Activated CD4-positive, alpha-beta T cell treated with anti-CD3 and anti-CD28 coated beads, Interleukin-2, amount 10 ng/mL, durations not matched to agents 24 days and 14 days (primary cell): ENCODE measurements at regions of chr1 and their contacts with region 1.

Region 1: DNA sequence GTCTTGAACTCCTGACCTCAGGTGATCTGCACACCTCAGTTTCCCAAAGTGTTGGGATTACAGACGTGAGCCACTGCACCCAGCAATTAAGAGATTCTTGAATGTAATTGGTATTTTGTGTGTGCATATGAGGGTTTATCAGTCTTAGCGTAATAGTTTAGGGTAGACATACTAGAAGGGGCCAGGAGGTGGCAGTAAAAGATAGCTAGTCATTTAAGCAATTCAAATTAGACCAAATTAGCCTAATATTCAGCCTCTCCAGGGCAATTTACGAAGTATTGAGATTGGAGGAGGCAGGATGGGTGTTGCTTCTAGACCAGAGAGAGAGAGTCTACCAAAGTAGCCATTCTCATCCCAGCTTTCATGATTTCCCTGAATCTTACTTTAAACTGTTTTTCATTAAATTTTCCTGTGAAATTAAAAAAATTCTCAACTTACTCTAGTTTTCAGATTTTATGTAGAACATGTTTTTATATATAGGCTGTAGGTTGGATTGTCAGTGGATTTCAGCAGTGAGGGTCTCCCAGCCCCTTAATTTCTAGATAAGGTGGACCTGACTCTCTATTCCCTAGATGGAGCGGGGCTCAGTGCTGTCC is 119.7 kb downstream of the HHAT start:
- DNase-seq: peak; percentile 72
- H3K4me3 Mint-ChIP-seq: no peak overlapping the region
- H3K27ac Mint-ChIP-seq: no peak overlapping the region
- H3K4me1 Mint-ChIP-seq: peaks cover 24% of the 10 kb centered on the region
- H3K27me3 Mint-ChIP-seq: peaks cover 14% of the 10 kb centered on the region

Region 2: GRCh38 chr1:210373885-210374599 is 74.4 kb before region 1 on chr1:
- intact Hi-C with region 1: loop called (anchors 1 kb)
- DNase-seq: peak; percentile 88
- H3K4me3 Mint-ChIP-seq: no peak overlapping the region
- H3K27ac Mint-ChIP-seq: peak overlapping the region; percentile 75
- H3K4me1 Mint-ChIP-seq: peaks cover 9% of the 10 kb centered on the region
- H3K27me3 Mint-ChIP-seq: peaks cover 13% of the 10 kb centered on the region

Region 3: DNA sequence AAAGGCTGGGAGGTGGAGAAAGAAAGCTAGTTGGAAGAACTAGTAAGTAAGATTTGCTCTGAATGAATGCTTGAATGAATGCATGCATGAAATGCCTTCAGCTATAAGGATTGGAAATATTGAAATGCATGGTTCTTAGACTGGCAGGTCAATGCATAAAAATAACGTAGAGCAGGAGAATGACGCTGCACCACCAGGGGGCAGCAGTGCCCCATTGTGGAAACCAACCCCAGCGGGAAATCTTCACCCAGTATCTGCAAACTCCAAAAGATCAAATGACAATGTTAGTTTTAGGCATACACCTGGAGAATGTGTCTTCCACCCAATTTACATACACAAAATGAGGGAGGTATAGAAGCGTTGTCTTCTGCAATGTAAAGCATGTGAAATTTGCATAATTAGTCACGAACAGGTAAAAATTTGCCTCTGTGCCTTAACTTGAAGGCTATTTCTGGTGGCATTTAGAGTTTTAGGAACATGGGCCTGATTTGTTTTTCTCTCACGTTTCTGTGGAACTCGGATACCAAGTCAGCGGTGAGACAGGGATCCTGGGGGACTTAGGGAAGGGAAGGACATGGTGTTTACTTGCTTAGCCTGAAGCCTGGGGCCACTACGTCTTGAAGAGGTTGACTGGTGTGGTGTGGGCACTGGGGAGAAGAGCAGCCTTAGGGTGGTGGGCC is 41.0 kb before region 1 on chr1:
- intact Hi-C with region 1: loop called (anchors 2 kb)
- DNase-seq: peak; percentile 91
- H3K4me3 Mint-ChIP-seq: no peak overlapping the region
- H3K27ac Mint-ChIP-seq: no peak overlapping the region
- H3K4me1 Mint-ChIP-seq: no peaks in the 10 kb centered on the region
- H3K27me3 Mint-ChIP-seq: peaks cover 10% of the 10 kb centered on the region

Region 4: DNA sequence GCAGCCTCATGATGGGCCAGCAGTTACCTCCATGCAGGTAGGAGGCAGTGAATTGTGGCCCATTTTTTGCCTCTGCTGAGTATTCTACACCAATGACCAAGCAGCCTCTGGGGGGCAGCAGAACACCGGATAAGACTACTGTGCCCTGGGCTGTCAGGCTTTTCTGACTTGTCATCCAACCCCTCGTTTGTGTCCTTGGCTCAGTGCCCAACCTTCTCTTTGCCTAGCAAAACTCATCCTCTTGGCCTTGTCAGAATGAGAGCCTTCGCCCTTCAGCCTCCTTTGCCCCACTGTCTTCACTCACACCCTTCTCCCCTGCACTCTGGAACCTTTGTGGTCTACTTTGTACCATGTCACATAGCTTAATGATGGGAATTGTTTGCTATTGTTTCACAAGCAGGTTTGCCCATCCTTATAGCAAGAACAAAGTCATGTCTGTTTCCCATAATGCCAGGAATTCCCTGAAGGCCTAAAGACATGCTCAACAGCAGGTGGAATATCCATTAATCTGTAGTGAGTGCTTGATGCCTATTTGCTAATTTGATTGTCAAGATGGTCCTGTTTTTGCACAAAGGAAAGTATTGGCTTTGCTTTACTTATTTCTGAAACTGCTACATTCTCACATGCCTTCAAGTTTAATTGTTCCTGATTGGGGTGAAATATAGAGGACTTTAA is 136.2 kb after region 1 on chr1:
- intact Hi-C with region 1: loop called (anchors 1 kb)
- DNase-seq: peak; percentile 89
- H3K4me3 Mint-ChIP-seq: no peak overlapping the region
- H3K27ac Mint-ChIP-seq: no peak overlapping the region
- H3K4me1 Mint-ChIP-seq: no peaks in the 10 kb centered on the region
- H3K27me3 Mint-ChIP-seq: peaks cover 3% of the 10 kb centered on the region

Region 5: DNA sequence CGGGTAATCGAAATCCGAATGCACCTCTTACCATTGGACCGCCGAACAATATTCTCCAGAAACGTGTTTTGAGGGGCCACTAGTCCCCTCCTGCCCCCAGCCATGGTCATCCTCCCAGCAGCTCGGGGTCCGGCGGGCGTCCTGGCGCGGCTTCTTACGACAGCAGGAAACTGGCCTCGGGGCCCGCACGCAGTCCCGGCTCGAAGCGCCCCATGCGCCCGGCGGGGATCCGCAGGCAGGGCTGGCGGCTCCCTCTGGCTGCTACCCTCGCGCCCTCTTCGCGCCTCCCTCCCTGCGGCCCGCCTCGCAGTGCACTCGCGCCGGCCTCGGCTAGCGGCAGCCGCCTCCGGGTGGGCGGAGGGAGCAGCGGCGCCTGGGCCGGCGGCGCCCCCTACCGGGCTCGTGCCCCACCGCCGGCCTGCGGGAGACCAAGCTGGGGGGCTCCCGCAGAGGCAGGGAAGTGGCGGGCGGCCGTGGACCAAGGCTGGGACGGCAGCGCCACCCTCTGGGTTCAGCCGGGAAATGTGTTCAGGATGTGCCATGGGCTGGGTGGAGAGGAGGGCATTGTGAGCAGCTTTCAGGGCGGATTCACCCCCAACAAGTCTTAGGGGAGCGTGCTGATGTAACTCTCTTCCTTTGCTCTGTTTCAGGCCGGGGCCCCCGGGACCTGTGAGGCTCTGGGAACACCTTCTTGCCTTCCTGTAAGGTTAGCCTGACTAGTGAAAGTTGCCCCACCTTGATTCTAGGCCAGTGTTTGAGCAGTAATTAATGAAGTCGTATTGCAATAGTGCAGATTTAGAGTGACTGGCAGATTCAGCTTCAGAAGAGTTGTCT is 685.7 kb after region 1 on chr1 and contains the start of gene KCNH1:
- intact Hi-C with region 1: loop called (anchors 1 kb)
- DNase-seq: peak; percentile 91
- H3K4me3 Mint-ChIP-seq: peak within 1 kb of the TSS; percentile 71
- H3K27ac Mint-ChIP-seq: no peak within 1 kb of the TSS
- H3K4me1 Mint-ChIP-seq: peaks cover 2% of the 10 kb centered on the region
- H3K27me3 Mint-ChIP-seq: peaks cover 75% of the 10 kb centered on the region
- total RNA-seq, gene KCNH1: not detected in 2 replicates

Region 6: DNA sequence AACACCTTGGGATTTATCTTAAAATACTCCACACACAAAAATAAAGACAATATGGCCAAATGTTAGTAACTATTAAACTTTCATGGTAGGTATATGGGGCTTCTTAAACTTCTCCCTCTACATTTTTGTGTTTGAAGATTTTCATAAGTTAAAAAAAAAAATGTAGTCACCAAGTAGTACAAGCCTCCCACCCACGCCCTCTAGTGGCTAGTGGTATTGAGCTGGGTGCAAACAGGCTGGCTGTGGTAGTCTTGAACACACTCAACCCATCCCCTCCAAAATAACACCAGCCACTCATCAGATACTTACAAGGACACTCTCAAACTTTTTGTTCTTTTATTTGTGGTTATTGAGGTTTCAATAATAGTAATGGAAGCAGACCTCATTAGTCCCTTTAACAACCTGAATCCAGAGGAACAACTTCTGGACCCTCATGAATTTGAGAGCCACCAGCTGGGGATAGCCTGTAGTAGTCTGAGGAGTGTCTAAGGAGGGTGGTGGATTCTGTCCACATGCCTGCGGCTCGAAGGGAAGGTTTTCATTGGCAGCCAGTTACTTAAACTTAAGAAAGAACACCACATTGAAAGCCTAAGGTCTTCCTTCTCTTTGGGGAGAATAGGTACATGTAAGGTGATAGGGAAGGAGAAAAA is 1027.9 kb after region 1 on chr1:
- intact Hi-C with region 1: loop called (anchors 5 kb)
- DNase-seq: peak; percentile 93
- H3K4me3 Mint-ChIP-seq: no peak overlapping the region
- H3K27ac Mint-ChIP-seq: no peak overlapping the region
- H3K4me1 Mint-ChIP-seq: peaks cover 2% of the 10 kb centered on the region
- H3K27me3 Mint-ChIP-seq: peaks cover 22% of the 10 kb centered on the region

Region 7: DNA sequence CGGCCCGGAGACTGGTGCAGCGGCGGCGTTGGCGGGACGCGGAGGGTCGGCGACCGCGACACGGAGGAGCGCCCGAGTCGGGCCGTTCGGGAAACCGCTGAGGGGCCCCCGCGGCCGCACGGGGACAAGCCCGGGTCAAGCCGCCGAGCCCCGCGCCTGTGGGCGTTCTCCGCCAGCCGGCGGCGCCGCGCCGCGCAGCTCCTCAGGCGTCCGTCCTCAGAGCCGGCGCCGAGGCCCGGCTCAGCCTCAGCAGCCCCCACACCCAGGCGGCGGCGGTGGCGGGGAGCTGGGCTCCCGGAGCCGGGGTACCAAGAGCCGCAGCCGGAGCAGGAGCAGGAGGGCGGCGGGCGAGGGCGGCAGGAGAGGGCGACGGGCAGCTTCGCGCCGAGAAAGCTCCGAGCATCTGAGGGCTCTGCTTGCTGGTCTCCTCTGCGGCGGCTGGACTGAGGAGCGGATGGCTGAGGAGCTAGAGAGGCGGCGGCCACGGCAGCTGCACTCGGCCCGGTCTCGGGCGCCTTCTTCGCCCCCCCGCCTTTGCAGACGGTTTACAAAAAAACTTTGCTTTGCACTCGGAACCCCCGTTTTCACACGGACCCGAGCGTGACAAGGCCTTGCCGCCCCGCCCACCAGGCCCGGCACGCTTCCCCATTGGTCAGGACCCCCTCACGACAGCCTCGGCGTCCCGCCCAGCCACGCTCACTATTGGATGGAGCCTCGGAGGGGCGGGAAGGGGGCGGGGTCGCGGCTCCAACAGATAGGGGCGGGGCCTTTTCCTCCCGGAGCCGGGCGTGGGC is 1130.4 kb after region 1 on chr1 and contains the start of gene SLC30A1:
- intact Hi-C with region 1: loop called (anchors 5 kb)
- DNase-seq: peak; percentile 100
- H3K4me3 Mint-ChIP-seq: peak within 1 kb of the TSS; percentile 92
- H3K27ac Mint-ChIP-seq: peak within 1 kb of the TSS; percentile 87
- H3K4me1 Mint-ChIP-seq: peaks cover 33% of the 10 kb centered on the region
- H3K27me3 Mint-ChIP-seq: peaks cover 4% of the 10 kb centered on the region
- total RNA-seq, gene SLC30A1: 8.5 and 9.0 TPM in 2 replicates